CD4-positive, alpha-beta T cell (primary cell): ENCODE measurements at regions of chr16 and their contacts with region 1.

Region 1: DNA sequence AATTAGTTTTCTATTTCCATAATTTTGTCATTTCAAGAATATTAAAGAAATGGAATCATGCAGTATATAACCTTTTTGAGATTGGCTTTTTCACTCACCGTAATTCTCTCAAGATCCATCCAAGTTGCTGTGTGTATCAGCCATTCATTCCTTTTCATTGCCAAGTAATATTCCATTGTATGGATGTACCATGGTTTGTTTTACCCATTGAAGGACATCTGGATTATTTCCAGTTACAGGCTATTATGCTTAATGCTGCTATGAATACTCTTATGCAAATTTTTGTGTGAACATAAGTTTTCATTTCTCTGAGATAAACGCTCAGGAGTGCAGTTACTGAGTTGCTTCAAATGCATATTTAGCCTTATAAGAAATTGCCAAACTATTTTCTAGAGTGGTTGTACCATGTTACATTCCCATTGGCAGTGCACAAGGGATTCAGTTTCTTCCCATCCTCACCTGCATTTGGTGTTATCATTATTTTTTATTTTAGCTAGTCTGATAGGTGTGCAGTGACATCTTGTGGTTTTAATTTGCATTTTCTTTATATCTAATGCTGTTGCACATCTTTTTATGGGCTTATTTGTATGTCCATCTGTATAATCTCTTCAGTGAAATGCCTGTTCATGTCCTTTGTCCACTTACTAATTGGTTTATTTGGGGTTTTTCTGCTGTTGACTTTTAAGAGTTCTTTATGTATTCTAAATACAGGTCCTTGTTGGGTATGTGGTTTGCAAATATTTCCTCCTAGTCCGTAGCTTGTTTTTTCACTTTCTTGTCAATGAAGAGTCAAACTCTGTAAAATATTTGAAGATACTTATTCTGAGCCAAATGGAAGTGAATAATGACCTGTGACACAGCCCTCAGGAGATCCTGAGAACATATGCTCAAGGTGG is 32.7 kb downstream of the BMERB1 start:
- DNase-seq: peak in 1 of 14 experiments; percentile 12
- ATAC-seq: no peak
- H3K4me3 ChIP-seq: no peak overlapping the region
- H3K4me3 Mint-ChIP-seq: no peak overlapping the region
- H3K27ac ChIP-seq: no peak overlapping the region
- H3K27ac Mint-ChIP-seq: no peak overlapping the region
- H3K4me1 ChIP-seq: no peaks in the 10 kb centered on the region
- H3K4me1 Mint-ChIP-seq: no peaks in the 10 kb centered on the region
- H3K27me3 ChIP-seq: no peaks in the 10 kb centered on the region
- H3K27me3 Mint-ChIP-seq: peaks cover 8% of the 10 kb centered on the region
- CTCF ChIP-seq: no peak

Region 2: DNA sequence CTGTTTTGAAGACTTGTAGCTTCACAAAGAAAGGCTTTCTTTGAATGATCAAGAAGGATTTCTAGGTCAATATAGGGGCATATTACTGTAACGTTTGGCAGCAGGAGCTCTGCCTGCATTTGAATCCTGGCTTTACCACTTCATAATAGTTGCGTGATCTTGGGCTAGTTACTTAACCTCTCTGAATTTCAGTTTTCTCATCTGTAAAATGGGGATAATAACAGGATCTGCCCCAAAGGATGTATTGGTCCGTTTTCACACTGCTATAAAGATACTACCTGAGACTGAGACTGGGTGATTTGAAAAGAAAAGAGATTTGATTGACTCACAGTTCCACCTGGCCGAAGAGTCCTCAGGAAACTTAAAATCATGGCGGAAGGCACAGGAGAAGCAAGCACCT is 20.2 kb before region 1 on chr16:
- CTCF ChIA-PET with region 1: no interaction called
- POLR2A ChIA-PET with region 1: no interaction called
- intact Hi-C with region 1: loop called in 1 of 2 experiments (anchors 2 kb)
- DNase-seq: no peak
- ATAC-seq: no peak
- H3K4me3 ChIP-seq: no peak overlapping the region
- H3K4me3 Mint-ChIP-seq: no peak overlapping the region
- H3K27ac ChIP-seq: no peak overlapping the region
- H3K27ac Mint-ChIP-seq: no peak overlapping the region
- H3K4me1 ChIP-seq: no peaks in the 10 kb centered on the region
- H3K4me1 Mint-ChIP-seq: no peaks in the 10 kb centered on the region
- H3K27me3 ChIP-seq: no peaks in the 10 kb centered on the region
- H3K27me3 Mint-ChIP-seq: peaks cover 9% of the 10 kb centered on the region
- CTCF ChIP-seq: no peak

Region 3: DNA sequence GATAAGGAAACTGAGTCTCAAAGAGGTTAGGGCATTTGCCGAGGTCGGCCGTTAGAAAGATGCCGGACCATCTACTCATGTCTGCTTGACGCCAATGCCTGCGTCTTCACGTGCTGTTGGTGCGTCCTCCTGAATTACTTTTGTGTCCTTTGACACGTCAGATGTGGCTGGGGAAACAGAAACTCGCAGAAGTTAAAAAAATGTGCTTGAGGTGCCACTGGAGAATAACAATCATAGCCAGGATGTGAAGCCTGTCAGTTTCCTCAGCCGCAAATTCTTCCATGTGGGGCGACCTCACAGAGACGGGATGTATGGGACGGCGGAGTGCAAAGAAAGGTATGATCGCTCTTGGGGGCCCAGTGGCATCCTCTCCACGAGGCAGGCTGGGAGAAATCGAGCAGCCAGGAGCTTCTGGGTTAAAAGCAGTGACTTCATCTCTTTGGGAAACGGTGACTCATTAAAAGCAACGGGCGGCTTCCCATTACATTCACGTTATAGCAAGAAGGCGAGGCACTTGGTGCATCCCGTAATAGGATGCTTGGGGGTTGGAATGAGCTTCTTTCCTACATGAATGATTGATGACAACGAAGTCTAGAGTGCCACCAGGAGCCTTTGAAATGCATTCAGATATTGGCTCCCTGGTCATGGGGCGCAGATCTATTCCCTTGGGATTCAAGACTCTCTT is 35.0 kb after region 1 on chr16:
- CTCF ChIA-PET with region 1: no interaction called
- POLR2A ChIA-PET with region 1: no interaction called
- intact Hi-C with region 1: no loop called
- DNase-seq: no peak
- ATAC-seq: no peak
- H3K4me3 ChIP-seq: no peak overlapping the region
- H3K4me3 Mint-ChIP-seq: no peak overlapping the region
- H3K27ac ChIP-seq: no peak overlapping the region
- H3K27ac Mint-ChIP-seq: no peak overlapping the region
- H3K4me1 ChIP-seq: no peaks in the 10 kb centered on the region
- H3K4me1 Mint-ChIP-seq: no peaks in the 10 kb centered on the region
- H3K27me3 ChIP-seq: no peaks in the 10 kb centered on the region
- H3K27me3 Mint-ChIP-seq: peaks cover under 1% of the 10 kb centered on the region
- CTCF ChIP-seq: no peak